ENCODE measurements at regions of chr3 and their contacts with region 1.

Region 1: DNA sequence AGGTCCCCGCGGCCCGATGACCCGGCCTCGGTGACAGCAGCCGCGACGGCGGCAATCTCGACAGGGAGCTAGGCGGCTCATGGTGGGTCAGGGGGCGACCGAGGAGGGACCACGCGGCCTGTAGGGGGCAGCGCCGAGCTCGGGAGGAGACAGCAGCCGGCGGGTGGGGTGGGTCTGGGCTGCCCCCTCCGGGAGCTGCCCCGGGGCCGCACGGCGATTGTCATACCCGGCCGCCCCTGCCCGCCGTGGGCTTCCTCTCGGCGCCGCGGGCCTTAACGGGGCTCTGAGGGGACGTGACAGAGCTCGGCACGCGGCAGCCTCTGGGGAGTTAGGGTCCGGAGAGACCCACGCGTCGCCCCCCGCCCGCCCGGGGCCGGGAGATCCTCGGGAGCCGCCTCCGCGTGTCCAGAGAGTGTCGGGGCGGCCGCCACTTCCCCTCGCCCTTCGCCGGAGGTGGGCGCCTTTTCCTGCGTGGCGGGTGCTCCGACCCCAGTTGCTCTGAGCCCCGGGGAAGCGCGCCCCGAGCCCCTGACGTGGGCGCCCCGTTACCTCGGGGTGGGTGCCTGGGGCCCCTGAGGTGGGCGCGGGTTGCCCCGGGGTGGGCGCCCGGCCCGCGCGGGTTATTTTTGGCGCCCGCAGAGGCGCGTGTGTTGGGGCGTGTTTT is 539 bp upstream of the PLCL2 start:
- DNase-seq: peak; percentile 74 to 90
- ATAC-seq: peak; percentile 88
- H3K4me3 ChIP-seq: peak overlapping the region; percentile 59 to 96
- H3K27ac ChIP-seq: peak overlapping the region; percentile 6 to 43
- H3K4me1 ChIP-seq: peaks cover 0 to 3% of the 10 kb centered on the region in 2 donors
- H3K27me3 ChIP-seq: no peaks in the 10 kb centered on the region

Region 2: GRCh38 chr3:17032407-17033034 is 148.3 kb after region 1 on chr3:
- intact Hi-C with region 1: loop called in 1 of 2 experiments (anchors 5 kb)
- DNase-seq: no peak
- ATAC-seq: peak; percentile 75
- H3K4me3 ChIP-seq: no peak overlapping the region
- H3K27ac ChIP-seq: no peak overlapping the region
- H3K4me1 ChIP-seq: no peaks in the 10 kb centered on the region
- H3K27me3 ChIP-seq: no peaks in the 10 kb centered on the region

Measured in aorta (tissue), 5 donors.